ENCODE measurements at regions of chr4 and their contacts with region 1.

Region 1: DNA sequence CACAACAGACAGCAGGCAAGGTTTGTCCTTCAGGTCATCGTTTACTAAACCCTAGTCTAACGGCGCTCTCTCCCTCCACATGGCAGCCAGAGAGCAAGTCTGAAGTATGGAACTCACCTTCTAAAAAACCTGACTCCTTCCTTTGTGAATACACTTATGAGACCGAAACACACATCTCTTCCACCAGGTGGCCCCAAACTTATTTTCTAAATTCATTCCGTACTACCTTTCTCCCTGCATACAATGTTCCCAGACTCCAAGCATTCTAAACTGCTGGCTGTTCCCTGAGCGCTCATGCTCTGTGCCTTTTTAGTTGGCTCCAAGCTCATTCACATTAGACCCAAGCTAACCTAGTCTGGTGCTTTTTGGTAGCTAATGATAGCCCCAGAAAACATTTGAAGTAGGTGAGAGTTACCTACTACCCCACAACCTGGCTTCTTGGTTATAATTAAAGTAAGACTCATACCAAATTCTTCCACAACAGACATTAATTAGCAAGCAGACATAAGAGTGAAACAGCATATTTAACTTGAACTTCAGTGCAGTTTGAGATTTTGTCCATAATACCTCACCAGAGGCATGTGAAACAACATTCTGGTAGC is 67.6 kb upstream of the DCLK2 start:
- DNase-seq: no peak

Region 2: GRCh38 chr4:150098214-150098613 is 87.6 kb after region 1 on chr4:
- intact Hi-C with region 1: no loop called
- DNase-seq: no peak

Region 3: DNA sequence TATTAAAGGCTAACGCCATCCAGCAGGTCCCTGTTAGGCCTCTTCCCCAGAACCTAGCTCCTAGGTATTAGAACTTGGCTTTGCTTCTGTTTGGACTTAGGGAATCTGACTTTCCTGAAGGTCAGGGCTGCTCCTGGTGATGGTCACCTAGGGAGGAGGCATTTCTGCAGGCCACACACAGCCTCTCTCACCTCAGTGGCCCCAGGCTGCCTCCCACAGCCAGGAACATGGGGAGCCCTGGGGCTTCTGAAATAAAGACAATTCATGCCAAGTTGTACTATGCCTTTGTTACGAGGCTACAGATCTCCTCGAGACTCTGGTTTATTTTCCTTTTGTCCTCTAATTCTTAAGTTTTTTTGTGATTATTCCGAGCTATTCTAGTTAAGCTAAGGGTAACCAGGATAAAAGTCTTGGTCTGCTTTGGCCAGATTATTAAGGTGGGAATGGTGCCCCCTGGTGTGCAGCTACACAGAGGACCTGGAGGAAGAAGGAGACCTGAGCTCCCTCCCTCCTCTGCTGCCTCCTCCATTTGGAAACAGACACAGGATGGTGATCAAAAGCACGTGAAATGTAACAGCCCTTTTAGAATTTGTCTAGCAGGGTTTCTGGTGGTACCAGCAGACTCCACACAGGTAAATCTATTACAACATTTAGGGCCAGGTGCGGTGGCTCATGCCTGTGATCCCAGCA is 198.7 kb after region 1 on chr4:
- intact Hi-C with region 1: loop called (anchors 2 kb)
- DNase-seq: no peak